Adrenal gland (tissue), 19 donors: ENCODE measurements at regions of chr7 and their contacts with region 1.

Region 1: GRCh38 chr7:44114586-44115310 is 8.6 kb downstream of the POLD2 start:
- DNase-seq: peak; percentile 61 to 78 (median 72)
- H3K4me3 ChIP-seq: no peak overlapping the region
- H3K27ac ChIP-seq: no peak overlapping the region
- H3K4me1 ChIP-seq: no peaks in the 10 kb centered on the region
- H3K27me3 ChIP-seq: no peaks in the 10 kb centered on the region
- CTCF ChIP-seq: no peak
- POLR2A ChIP-seq: no peak

Region 2: DNA sequence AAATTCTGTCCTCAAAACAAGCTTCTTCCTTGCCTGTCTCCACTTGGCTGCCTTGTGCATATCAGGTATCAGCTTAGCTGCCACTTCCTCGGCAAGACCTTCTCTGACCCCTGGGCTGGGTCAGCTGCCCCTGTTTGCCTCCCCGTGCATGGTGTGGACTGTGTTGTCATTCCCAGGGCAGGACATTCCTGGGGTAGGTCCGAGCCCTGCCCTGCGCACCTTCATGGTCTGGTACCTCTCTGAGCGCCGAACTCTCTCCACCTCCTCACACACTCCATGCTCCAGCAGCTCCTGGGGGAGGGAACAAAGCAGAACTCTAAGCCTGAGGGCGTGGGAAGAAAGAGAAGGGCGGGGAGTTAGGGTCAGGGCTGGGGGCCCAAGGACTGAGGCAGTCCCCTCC is 36.2 kb before region 1 on chr7:
- intact Hi-C with region 1: loop called in 1 of 2 experiments (anchors 5 kb)
- DNase-seq: no peak
- H3K4me3 ChIP-seq: no peak overlapping the region
- H3K27ac ChIP-seq: no peak overlapping the region
- H3K4me1 ChIP-seq: peaks cover 10 to 11% of the 10 kb centered on the region in 2 donors
- H3K27me3 ChIP-seq: no peaks in the 10 kb centered on the region
- CTCF ChIP-seq: no peak
- POLR2A ChIP-seq: no peak

Region 3: GRCh38 chr7:44216521-44217222 is 101.9 kb after region 1 on chr7:
- intact Hi-C with region 1: no loop called
- DNase-seq: peak in 2 of 7 donors; percentile 37 to 84
- H3K4me3 ChIP-seq: no peak overlapping the region
- H3K27ac ChIP-seq: peak overlapping the region in 1 of 5 donors; percentile 22
- H3K4me1 ChIP-seq: no peaks in the 10 kb centered on the region
- H3K27me3 ChIP-seq: no peaks in the 10 kb centered on the region
- CTCF ChIP-seq: no peak
- POLR2A ChIP-seq: no peak